PC-3 (cell line): ENCODE measurements at regions of chr1 and their contacts with region 1.

Region 1: GRCh38 chr1:192826791-192827477 is 18.1 kb downstream of the RGS2 start:
- DNase-seq: peak; percentile 91
- ATAC-seq: peak; percentile 93
- H3K4me3 ChIP-seq: peak overlapping the region; percentile 44; the same call in 1 of the 2 replicates
- H3K27ac ChIP-seq: peak overlapping the region; percentile 97
- H3K4me1 ChIP-seq: peaks cover 33% of the 10 kb centered on the region
- H3K27me3 ChIP-seq: no peaks in the 10 kb centered on the region
- CTCF ChIP-seq: no peak

Region 2: DNA sequence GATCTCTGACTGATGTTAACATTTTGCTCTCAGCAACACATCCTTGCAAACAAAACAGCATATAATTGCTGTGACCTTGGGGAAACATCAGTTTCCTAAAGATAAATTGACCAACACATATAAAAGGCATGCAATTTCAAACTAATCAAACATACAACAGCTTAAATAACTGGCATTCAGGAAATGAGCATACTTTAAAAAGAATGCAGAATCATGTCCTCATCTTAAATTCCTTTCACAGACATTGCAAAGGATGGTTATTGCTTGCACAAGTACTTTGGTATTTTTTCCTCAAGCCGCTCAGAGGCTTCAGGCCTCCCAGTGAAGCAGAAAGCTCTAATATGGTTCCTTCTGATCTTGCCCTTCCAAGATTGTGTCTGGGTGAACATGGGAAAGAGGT is 722.1 kb before region 1 on chr1:
- CTCF ChIA-PET with region 1: no interaction called
- POLR2A ChIA-PET with region 1: interaction called, 18 read pairs
- intact Hi-C with region 1: no loop called
- DNase-seq: peak; percentile 2
- ATAC-seq: peak; percentile 29
- H3K4me3 ChIP-seq: no peak overlapping the region
- H3K27ac ChIP-seq: no peak overlapping the region
- H3K4me1 ChIP-seq: no peaks in the 10 kb centered on the region
- H3K27me3 ChIP-seq: no peaks in the 10 kb centered on the region
- CTCF ChIP-seq: no peak